Breast epithelium (tissue), 4 donors: ENCODE measurements at regions of chr17 and their contacts with region 1.

Region 1: GRCh38 chr17:52255347-52255746 is 96.8 kb upstream of the CA10 start:
- DNase-seq: no peak
- H3K4me3 ChIP-seq: no peak overlapping the region
- H3K27ac ChIP-seq: no peak overlapping the region
- H3K4me1 ChIP-seq: no peaks in the 10 kb centered on the region
- H3K27me3 ChIP-seq: no peaks in the 10 kb centered on the region
- CTCF ChIP-seq: no peak
- POLR2A ChIP-seq: no peak

Region 2: GRCh38 chr17:51982189-51982588 is 273.2 kb before region 1 on chr17:
- intact Hi-C with region 1: loop called (anchors 5 kb)
- DNase-seq: no peak
- H3K4me3 ChIP-seq: no peak overlapping the region
- H3K27ac ChIP-seq: no peak overlapping the region
- H3K4me1 ChIP-seq: no peaks in the 10 kb centered on the region
- H3K27me3 ChIP-seq: no peaks in the 10 kb centered on the region
- CTCF ChIP-seq: no peak
- POLR2A ChIP-seq: no peak

Region 3: GRCh38 chr17:52383493-52384100 is 128.2 kb after region 1 on chr17:
- intact Hi-C with region 1: no loop called
- DNase-seq: peak in 1 of 2 donors; percentile 25
- H3K4me3 ChIP-seq: no peak overlapping the region
- H3K27ac ChIP-seq: no peak overlapping the region
- H3K4me1 ChIP-seq: no peaks in the 10 kb centered on the region
- H3K27me3 ChIP-seq: no peaks in the 10 kb centered on the region
- CTCF ChIP-seq: peak in 2 of 3 donors; percentile 33 to 48
- POLR2A ChIP-seq: no peak